Transverse colon (tissue), 4 donors: ENCODE measurements at regions of chr5 and their contacts with region 1.

Region 1: DNA sequence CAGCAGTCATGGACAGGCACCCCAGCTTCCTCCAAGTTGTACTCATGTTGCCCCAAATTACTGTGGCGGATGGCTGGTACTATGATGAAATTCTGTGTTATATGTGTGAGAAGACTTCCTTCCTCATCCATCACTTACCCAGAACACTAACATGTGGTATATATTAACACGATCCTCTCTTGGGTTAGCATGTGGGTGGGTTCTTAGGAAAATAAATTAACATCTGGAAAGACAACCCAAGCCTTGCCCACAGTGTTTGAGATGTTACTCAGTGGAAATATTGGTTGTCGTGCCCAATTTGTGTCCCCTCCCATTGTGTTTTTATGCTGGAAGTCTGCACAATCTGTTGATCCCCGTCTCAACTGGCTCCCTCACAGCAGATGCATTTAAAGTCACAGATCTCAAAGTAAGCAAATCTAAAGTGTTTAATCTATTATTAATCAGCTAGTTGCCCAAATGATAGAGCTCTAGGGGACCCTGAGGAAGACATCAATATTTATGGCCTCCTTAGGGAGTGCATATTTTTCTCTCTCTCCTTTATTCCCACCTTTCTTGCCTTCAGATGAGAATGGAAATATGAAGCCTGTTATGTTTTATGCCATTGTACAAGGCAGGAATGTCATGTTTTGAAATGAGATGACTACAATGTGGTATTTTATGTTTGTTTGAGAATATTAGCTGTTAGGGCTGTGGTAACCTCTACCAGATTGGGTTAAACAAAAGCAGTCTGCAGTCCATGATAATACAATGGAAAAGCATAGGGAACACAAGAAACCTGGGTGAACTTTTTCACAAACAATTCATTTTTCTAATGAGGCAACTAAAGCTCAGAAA is 93.9 kb downstream of the GRIA1 start:
- DNase-seq: no peak
- H3K4me3 ChIP-seq: no peak overlapping the region
- H3K27ac ChIP-seq: no peak overlapping the region
- H3K4me1 ChIP-seq: no peaks in the 10 kb centered on the region
- H3K27me3 ChIP-seq: no peaks in the 10 kb centered on the region
- CTCF ChIP-seq: no peak
- EP300 ChIP-seq: no peak
- POLR2A ChIP-seq: no peak

Region 2: DNA sequence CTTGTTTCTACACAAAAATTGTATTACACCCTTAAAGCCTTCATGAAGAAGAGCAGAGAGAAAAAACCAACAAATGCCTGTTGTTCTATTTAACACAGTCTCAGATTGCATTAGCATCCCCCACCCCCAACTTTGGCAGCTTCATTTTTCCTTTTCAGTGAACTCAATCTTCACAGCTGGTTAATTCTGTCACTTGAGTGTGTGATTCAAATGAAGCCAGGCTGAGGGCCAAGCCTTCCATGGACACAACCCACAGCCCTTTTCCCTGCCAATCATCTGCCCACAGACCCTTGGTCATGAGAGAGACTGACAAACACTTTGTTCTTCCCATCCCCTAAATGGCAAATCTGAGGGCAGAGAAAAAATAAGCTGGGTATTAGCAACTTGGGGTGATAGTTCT is 961.7 kb before region 1 on chr5:
- in situ Hi-C with region 1: no loop called
- intact Hi-C with region 1: loop called (anchors 5 kb)
- DNase-seq: no peak
- H3K4me3 ChIP-seq: no peak overlapping the region
- H3K27ac ChIP-seq: no peak overlapping the region
- H3K4me1 ChIP-seq: no peaks in the 10 kb centered on the region
- H3K27me3 ChIP-seq: no peaks in the 10 kb centered on the region
- CTCF ChIP-seq: no peak
- EP300 ChIP-seq: no peak
- POLR2A ChIP-seq: no peak

Region 3: GRCh38 chr5:153711755-153712154 is 127.4 kb after region 1 on chr5:
- in situ Hi-C with region 1: no loop called
- intact Hi-C with region 1: no loop called
- DNase-seq: no peak
- H3K4me3 ChIP-seq: no peak overlapping the region
- H3K27ac ChIP-seq: no peak overlapping the region
- H3K4me1 ChIP-seq: no peaks in the 10 kb centered on the region
- H3K27me3 ChIP-seq: no peaks in the 10 kb centered on the region
- CTCF ChIP-seq: no peak
- EP300 ChIP-seq: no peak
- POLR2A ChIP-seq: no peak